Activated naive CD4-positive, alpha-beta T cell treated with anti-CD3 and anti-CD28 coated beads for 36 hours (primary cell): ENCODE measurements at regions of chr19 and their contacts with region 1.

Region 1: DNA sequence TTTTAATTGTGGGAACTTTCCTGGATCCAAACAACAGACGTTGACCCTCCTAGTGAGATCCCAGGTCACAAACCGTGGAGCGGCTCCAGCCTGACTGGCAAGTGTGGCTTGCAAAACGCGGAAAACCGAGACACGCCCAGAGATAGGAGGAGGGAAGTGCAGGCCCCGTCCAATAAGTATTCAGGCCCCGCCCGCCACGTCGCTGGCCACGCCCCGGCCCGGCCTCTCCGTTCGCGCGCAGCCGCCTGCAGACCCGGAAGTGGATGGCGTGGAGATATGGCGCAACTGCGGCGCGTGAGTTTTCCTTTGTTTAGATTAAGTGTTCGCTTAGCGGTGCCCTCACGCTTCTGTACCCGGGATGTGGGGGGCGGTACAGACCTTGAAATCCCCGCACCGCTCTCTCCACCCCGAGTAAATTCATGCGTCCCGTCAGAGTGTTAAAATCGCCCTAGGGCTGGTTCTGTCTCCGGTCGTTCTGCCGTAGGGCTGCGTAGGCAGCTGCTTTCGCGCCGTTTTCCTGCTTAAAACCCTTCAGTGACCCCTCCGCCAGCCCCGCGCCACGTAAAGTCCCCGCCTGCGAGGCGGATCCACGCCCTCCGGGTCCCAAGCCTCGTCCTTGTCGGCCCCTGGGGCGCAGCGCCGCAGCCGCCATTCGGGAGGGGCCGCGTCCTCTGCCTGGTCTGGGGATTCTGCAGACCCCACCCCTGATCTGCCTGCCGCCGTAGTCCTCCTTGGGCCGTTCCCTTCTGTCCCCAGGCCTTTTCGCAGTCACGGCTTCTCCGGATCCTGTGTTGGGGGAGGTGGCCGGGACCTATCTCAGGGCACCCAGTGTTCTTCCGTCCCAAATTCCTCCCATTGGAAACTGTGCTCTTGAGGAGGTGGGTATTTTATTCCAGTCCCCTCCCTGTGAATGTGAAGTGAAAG is at the start of gene ZNF766:
- DNase-seq: peak; percentile 98
- H3K4me3 Mint-ChIP-seq: peak within 1 kb of the TSS; percentile 96
- H3K27ac Mint-ChIP-seq: peak within 1 kb of the TSS; percentile 91
- H3K4me1 Mint-ChIP-seq: peaks cover 27% of the 10 kb centered on the region
- H3K27me3 Mint-ChIP-seq: no peaks in the 10 kb centered on the region
- total RNA-seq, gene ZNF766: 22.3 to 23.6 TPM

Region 2: GRCh38 chr19:52139252-52140031 is 130.2 kb before region 1 on chr19 and contains the start of gene ZNF616:
- CTCF ChIA-PET with region 1: no interaction called
- intact Hi-C with region 1: loop called (anchors 1 kb)
- DNase-seq: peak; percentile 99
- H3K4me3 Mint-ChIP-seq: peak within 1 kb of the TSS; percentile 96
- H3K27ac Mint-ChIP-seq: peak within 1 kb of the TSS; percentile 93
- H3K4me1 Mint-ChIP-seq: peaks cover 24% of the 10 kb centered on the region
- H3K27me3 Mint-ChIP-seq: no peaks in the 10 kb centered on the region
- total RNA-seq, gene ZNF616: 7.6 to 8.7 TPM

Region 3: GRCh38 chr19:52219611-52220010 is 50.0 kb before region 1 on chr19:
- CTCF ChIA-PET with region 1: no interaction called
- intact Hi-C with region 1: no loop called
- DNase-seq: no peak
- H3K4me3 Mint-ChIP-seq: no peak overlapping the region
- H3K27ac Mint-ChIP-seq: no peak overlapping the region
- H3K4me1 Mint-ChIP-seq: no peaks in the 10 kb centered on the region
- H3K27me3 Mint-ChIP-seq: no peaks in the 10 kb centered on the region

Region 4: DNA sequence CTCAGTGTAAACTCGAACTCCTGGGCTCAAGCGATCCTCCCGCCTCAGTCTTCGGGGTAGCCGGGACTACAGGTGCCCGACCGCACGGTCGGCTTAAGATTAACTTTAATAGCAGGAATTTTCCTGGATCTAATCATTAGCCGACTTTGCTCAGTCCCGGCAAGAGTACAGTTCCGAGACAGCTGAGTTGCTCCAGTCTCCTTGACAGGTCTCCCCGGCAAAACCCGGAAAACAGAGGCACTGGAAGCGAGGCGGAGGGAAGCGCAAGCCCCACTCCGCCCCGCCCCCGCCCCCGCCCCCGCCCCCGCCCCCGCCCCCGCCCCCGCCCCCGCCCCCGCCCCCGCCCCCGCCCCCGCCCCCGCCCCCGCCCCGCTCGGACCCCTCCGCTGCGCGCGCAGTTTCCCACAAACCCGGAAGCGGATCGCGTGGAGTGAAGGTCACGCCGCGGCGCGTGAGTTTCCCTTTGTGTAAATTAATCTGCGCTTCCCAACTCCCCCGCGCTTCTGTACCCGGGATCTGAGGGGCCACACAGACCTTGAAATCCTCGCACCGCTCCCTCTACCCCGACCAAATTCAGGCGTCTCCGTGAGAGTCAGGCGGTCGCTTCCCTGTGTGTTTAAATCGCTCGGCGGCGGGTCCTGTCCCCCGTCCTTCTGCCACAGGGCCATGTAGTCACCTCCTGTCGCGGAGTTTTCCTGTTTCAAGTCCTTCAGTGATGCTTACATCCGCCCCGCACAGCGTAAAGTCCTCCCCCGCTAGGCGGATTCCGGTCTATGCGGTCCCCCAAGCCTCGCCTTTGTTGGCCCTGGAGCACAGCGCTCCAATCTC is 27.4 kb after region 1 on chr19 and contains the start of gene ZNF480:
- CTCF ChIA-PET with region 1: no interaction called
- intact Hi-C with region 1: loop called (anchors 2 kb)
- DNase-seq: peak; percentile 80
- H3K4me3 Mint-ChIP-seq: peak within 1 kb of the TSS; percentile 91
- H3K27ac Mint-ChIP-seq: peak within 1 kb of the TSS; percentile 90
- H3K4me1 Mint-ChIP-seq: peaks cover 15% of the 10 kb centered on the region
- H3K27me3 Mint-ChIP-seq: peaks cover 2% of the 10 kb centered on the region
- total RNA-seq, gene ZNF480: 3.7 to 4.2 TPM

Region 5: GRCh38 chr19:52336117-52336790 is 66.7 kb after region 1 on chr19 and contains the start of gene ZNF610:
- CTCF ChIA-PET with region 1: no interaction called
- intact Hi-C with region 1: loop called (anchors 5 kb)
- DNase-seq: peak; percentile 94
- H3K4me3 Mint-ChIP-seq: peak within 1 kb of the TSS; percentile 93
- H3K27ac Mint-ChIP-seq: peak within 1 kb of the TSS; percentile 89
- H3K4me1 Mint-ChIP-seq: peaks cover 10% of the 10 kb centered on the region
- H3K27me3 Mint-ChIP-seq: no peaks in the 10 kb centered on the region
- total RNA-seq, gene ZNF610: 0.64 TPM

Region 6: DNA sequence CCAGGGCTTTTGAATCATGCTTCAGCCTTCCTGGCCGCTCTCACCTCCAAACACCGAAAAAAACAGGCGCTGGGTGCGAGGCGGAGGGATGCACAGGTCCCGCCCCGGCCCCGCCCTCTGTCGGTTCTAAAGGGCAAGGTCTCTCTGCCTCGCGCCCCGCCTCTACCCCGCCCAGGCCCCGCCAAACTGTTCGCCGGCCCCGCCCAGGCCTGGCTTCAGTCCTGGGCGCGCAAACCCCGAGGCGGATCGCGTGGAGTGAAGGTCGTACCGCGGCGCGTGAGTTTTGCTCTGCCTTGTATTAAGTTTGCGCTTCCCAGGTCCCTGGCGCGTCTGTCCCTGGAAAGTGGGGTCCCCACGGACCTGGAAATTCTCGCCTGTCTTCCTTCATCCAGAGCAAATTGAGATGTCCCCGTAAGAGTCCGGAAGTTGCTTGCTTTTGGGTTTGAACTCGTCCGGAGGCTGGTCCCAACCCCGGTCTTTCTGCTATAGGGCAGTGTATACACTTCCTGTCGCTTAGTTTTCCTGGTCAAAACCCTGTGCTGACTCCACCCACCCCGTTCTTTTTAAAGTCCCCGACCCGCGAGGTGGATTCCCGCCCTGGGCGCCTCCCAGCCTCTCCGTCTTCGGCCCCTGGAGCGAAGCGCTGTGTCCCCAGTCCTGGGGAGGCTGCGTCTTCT is 266.3 kb after region 1 on chr19:
- CTCF ChIA-PET with region 1: no interaction called
- intact Hi-C with region 1: no loop called
- DNase-seq: peak; percentile 94
- H3K4me3 Mint-ChIP-seq: peak overlapping the region; percentile 85
- H3K27ac Mint-ChIP-seq: peak overlapping the region; percentile 92
- H3K4me1 Mint-ChIP-seq: peaks cover 26% of the 10 kb centered on the region
- H3K27me3 Mint-ChIP-seq: no peaks in the 10 kb centered on the region